ENCODE measurements at regions of chr10 and their contacts with region 1.

Region 1: GRCh38 chr10:30783939-30784500 is 154.5 kb upstream of the LYZL2 start:
- DNase-seq: peak; percentile 84 to 90 (median 88)
- H3K4me3 ChIP-seq: peak overlapping the region in 6 of 7 experiments; percentile 51 to 87 (median 62)
- H3K27ac ChIP-seq: no peak overlapping the region
- H3K4me1 ChIP-seq: peaks cover 0 to 38% (median 32%) of the 10 kb centered on the region in 4 experiments
- H3K27me3 ChIP-seq: peaks cover 0 to 8% (median 0%) of the 10 kb centered on the region in 5 experiments

Region 2: GRCh38 chr10:30080161-30080560 is 703.9 kb before region 1 on chr10:
- CTCF ChIA-PET with region 1: no interaction called
- POLR2A ChIA-PET with region 1: no interaction called
- DNase-seq: no peak
- H3K4me3 ChIP-seq: no peak overlapping the region
- H3K27ac ChIP-seq: no peak overlapping the region
- H3K4me1 ChIP-seq: peaks cover 0 to 4% (median 0%) of the 10 kb centered on the region in 4 experiments
- H3K27me3 ChIP-seq: no peaks in the 10 kb centered on the region

Region 3: GRCh38 chr10:30751678-30752331 is 32.2 kb before region 1 on chr10:
- CTCF ChIA-PET with region 1: interaction called, 56 read pairs
- POLR2A ChIA-PET with region 1: no interaction called
- DNase-seq: peak; percentile 51 to 84 (median 52)
- H3K4me3 ChIP-seq: no peak overlapping the region
- H3K27ac ChIP-seq: peak overlapping the region in 1 of 2 experiments; percentile 12
- H3K4me1 ChIP-seq: peaks cover 14 to 66% (median 47%) of the 10 kb centered on the region in 4 experiments
- H3K27me3 ChIP-seq: no peaks in the 10 kb centered on the region

Region 4: GRCh38 chr10:30763918-30764317 is 20.1 kb before region 1 on chr10:
- CTCF ChIA-PET with region 1: interaction called, 37 read pairs
- POLR2A ChIA-PET with region 1: no interaction called
- DNase-seq: peak in 2 of 3 donors; percentile 80 to 88
- H3K4me3 ChIP-seq: peak overlapping the region in 3 of 7 experiments; percentile 16 to 33 (median 31)
- H3K27ac ChIP-seq: peak overlapping the region in 1 of 2 experiments; percentile 65
- H3K4me1 ChIP-seq: peaks cover 2 to 33% (median 17%) of the 10 kb centered on the region in 4 experiments
- H3K27me3 ChIP-seq: no peaks in the 10 kb centered on the region

Region 5: DNA sequence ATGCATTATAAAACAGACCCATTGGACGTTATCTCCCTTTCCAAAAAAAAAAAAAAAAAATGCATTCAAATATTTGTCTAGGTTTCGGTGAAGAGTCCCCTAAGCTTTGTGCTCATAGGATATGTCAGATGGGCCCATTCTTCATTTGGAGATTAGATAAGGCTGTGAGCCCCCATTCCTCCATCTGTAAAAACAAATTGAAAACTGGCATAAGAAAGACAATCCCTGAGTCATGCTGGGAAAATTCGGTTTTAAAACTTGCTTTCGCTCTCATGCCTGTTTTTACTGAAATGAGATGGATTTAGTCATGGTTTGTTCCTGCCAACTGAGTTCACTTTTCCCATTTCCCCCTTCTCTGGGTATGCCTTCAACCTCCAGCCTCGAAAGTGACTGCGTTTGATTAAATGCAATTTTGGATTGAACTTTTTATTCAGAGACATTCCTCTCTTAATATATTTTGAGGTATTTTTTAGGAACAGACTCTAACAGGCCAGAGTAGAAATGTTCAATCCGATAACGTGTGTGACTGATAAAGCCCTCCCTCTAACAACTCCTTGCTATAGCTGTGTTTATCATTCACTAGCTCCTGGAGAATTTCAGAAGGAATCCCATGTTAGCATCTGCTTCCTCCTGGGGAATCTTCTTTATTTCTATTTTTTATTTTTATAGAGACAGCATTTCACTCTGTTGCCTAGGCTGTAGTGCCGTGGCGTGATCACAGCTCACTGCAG is 36.4 kb after region 1 on chr10:
- CTCF ChIA-PET with region 1: interaction called, 14 read pairs
- POLR2A ChIA-PET with region 1: no interaction called
- DNase-seq: peak in 1 of 3 donors; percentile 8
- H3K4me3 ChIP-seq: no peak overlapping the region
- H3K27ac ChIP-seq: no peak overlapping the region
- H3K4me1 ChIP-seq: peaks cover 6 to 39% (median 34%) of the 10 kb centered on the region in 4 experiments
- H3K27me3 ChIP-seq: peaks cover 0 to 2% (median 0%) of the 10 kb centered on the region in 5 experiments

Region 6: DNA sequence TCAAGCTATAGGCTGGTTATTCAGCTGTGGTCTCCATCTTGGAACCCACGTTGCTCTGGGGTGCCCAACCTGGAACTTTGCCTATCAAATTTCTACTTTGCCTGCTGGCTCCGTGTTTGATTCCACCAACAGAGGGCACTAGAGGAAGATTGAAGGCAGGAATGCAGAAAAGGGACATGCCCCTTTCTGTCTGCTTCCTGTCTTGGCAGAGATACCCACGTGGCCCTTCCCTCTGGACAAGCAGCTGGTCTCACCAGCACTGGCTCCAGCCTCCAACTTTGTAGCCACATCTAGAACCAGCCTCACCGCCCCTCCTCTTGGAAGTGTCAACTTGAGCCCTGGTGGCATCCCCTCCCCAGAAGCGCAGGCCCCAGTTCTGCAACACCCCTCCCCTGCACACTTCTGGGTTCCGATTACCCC is 299.8 kb after region 1 on chr10:
- CTCF ChIA-PET with region 1: interaction called, 11 read pairs
- POLR2A ChIA-PET with region 1: no interaction called
- DNase-seq: peak; percentile 73 to 82 (median 79)
- H3K4me3 ChIP-seq: no peak overlapping the region
- H3K27ac ChIP-seq: no peak overlapping the region
- H3K4me1 ChIP-seq: peaks cover 0 to 9% (median 2%) of the 10 kb centered on the region in 4 experiments
- H3K27me3 ChIP-seq: no peaks in the 10 kb centered on the region

Region 7: GRCh38 chr10:31770307-31770902 is 986.4 kb after region 1 on chr10:
- CTCF ChIA-PET with region 1: interaction called, 16 read pairs
- POLR2A ChIA-PET with region 1: no interaction called
- DNase-seq: peak; percentile 44 to 76 (median 70)
- H3K4me3 ChIP-seq: no peak overlapping the region
- H3K27ac ChIP-seq: no peak overlapping the region
- H3K4me1 ChIP-seq: no peaks in the 10 kb centered on the region
- H3K27me3 ChIP-seq: no peaks in the 10 kb centered on the region

Region 8: DNA sequence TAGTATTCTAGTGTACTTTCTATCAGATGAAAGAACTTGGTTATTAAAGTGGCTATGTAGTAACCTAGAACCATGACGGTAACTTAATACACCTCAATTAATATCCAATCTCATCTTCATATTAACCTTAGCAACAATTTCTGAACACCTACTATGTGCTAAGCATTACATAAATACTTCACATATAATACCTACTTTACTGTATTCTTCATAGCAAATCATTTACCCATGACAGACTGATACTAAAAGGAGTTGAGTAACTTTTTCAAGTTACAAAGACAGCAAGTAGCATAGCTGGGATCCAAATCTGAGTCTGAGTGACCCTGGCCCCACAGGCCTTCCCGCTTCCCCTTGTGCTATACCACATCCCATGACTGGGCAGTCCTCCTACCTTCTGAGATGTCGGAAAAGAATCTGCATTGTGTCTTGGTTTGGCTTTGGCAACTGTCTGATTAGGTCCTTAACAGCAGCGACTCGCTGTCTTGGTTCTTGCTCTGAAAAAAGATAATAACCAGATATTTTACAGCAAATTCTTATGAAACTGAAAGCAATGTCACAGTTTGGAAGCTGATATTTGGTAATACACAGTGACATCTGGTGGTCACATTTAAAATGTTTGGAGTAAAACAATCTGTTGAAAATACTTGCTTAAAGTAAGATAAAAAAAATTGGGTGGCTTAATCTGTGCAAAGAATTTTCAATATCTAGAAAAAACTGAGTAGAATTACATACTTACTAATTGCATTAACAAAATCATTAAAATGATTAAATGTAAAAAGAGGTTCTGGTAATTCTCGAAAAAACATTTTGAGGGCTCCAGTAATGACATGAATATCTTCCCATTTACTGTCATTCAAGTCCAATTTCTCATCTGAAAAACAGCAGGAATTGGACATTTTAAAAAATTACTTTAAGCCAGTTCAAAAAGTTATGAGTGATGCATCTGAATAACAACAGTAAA is 1024.5 kb after region 1 on chr10:
- CTCF ChIA-PET with region 1: interaction called, 13 read pairs
- POLR2A ChIA-PET with region 1: no interaction called
- DNase-seq: peak; percentile 68 to 82 (median 81)
- H3K4me3 ChIP-seq: peak overlapping the region in 3 of 7 experiments; percentile 19 to 66 (median 49)
- H3K27ac ChIP-seq: no peak overlapping the region
- H3K4me1 ChIP-seq: peaks cover 3 to 5% (median 3%) of the 10 kb centered on the region in 4 experiments
- H3K27me3 ChIP-seq: no peaks in the 10 kb centered on the region

Measured in common myeloid progenitor, CD34-positive (primary cell).